Activated CD4-positive, alpha-beta T cell treated with anti-CD3 and anti-CD28 coated beads for 36 hours (primary cell): ENCODE measurements at regions of chr10 and their contacts with region 1.

Region 1: DNA sequence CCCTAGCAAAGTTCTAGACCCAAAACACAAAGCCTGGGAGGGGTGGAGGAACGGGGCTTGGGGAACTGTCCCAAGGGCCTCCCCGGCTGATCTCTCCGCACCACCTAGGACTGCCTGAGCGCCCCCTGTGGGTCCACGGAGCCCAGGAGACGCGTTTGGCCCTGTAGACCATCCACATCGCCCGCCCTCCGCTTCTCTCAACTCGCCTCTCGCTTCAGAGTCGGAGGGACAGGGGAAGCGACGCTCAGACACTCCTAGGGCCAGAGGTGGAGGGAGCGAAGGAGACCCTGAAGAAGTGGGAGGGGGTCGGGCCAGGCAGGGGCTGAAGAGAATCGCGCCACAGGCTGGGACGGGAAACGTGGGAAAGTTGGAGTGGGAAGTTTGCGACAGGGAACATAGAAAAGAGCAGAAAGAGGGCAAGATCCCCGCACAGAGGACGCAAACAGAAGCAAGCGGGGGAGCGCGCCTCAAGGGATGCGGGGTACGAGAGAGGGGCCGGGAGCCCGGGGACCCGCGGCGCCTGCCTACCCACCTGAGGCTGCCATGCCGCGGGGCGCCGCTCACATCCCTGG is 378 bp downstream of the PIK3AP1 start:
- DNase-seq: peak; percentile 77
- ATAC-seq: peak; percentile 68
- H3K4me3 Mint-ChIP-seq: peak overlapping the region; percentile 93
- H3K27ac Mint-ChIP-seq: peak overlapping the region; percentile 84
- H3K4me1 Mint-ChIP-seq: peaks cover 12% of the 10 kb centered on the region
- H3K27me3 Mint-ChIP-seq: peaks cover 2% of the 10 kb centered on the region

Region 2: DNA sequence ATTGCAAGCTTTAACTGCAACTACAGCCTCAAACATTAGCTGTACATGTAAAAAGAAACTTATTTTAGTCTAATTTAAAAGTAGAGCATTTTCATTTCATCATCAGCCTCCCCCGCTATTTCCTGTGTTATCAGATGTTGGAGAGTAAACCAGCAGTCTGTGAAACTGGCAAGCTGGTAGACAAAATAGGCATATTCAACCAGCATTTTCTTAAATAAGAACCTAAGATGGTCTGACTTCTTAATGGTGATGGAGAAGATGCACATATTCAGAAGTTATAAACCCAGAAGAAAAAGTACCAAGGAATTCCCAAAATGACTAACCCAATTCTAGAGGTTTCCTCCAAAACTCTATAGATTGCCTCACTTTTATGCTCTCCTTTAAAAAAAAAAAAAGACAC is 24.6 kb before region 1 on chr10:
- CTCF ChIA-PET with region 1: no interaction called
- POLR2A ChIA-PET with region 1: no interaction called
- intact Hi-C with region 1: loop called in 1 of 2 experiments (anchors 2 kb)
- DNase-seq: peak; percentile 33
- ATAC-seq: peak; percentile 76
- H3K4me3 Mint-ChIP-seq: no peak overlapping the region
- H3K27ac Mint-ChIP-seq: peak overlapping the region; percentile 76
- H3K4me1 Mint-ChIP-seq: peaks cover 28% of the 10 kb centered on the region
- H3K27me3 Mint-ChIP-seq: no peaks in the 10 kb centered on the region